Activated CD8-positive, alpha-beta T cell treated with anti-CD3 and anti-CD28 coated beads for 36 hours (primary cell): ENCODE measurements at regions of chr3 and their contacts with region 1.

Region 1: GRCh38 chr3:52056968-52057805 is 816 bp upstream of the DUSP7 start:
- DNase-seq: peak; percentile 100
- ATAC-seq: peak; percentile 82
- H3K4me3 Mint-ChIP-seq: peak overlapping the region; percentile 83
- H3K27ac Mint-ChIP-seq: peak overlapping the region; percentile 95
- H3K4me1 Mint-ChIP-seq: peaks cover 32% of the 10 kb centered on the region
- H3K27me3 Mint-ChIP-seq: no peaks in the 10 kb centered on the region
- CTCF ChIP-seq: no peak

Region 2: GRCh38 chr3:51941798-51942602 is 115.2 kb before region 1 on chr3 and contains the starts of genes PARP3 and RRP9:
- CTCF ChIA-PET with region 1: interaction called, 11 read pairs
- POLR2A ChIA-PET with region 1: interaction called, 3 read pairs
- intact Hi-C with region 1: no loop called
- DNase-seq: peak; percentile 100
- ATAC-seq: peak; percentile 93
- H3K4me3 Mint-ChIP-seq: peak within 1 kb of the TSS; percentile 83
- H3K27ac Mint-ChIP-seq: peak within 1 kb of the TSS; percentile 90
- H3K4me1 Mint-ChIP-seq: peaks cover 28% of the 10 kb centered on the region
- H3K27me3 Mint-ChIP-seq: no peaks in the 10 kb centered on the region
- CTCF ChIP-seq: peak; percentile 93
- total RNA-seq, gene PARP3: 11.5 to 12.7 TPM
- total RNA-seq, gene RRP9: 40.0 to 40.7 TPM

Region 3: GRCh38 chr3:51995346-51996163 is 61.6 kb before region 1 on chr3 and contains the start of gene RPL29:
- CTCF ChIA-PET with region 1: interaction called, 74 read pairs
- POLR2A ChIA-PET with region 1: interaction called, 19 read pairs
- intact Hi-C with region 1: loop called (anchors 5 kb)
- DNase-seq: peak; percentile 94
- ATAC-seq: peak; percentile 96
- H3K4me3 Mint-ChIP-seq: peak within 1 kb of the TSS; percentile 99
- H3K27ac Mint-ChIP-seq: peak within 1 kb of the TSS; percentile 100
- H3K4me1 Mint-ChIP-seq: peaks cover 33% of the 10 kb centered on the region
- H3K27me3 Mint-ChIP-seq: no peaks in the 10 kb centered on the region
- CTCF ChIP-seq: no peak
- total RNA-seq, gene RPL29: 2,039 to 2,045 TPM

Region 4: DNA sequence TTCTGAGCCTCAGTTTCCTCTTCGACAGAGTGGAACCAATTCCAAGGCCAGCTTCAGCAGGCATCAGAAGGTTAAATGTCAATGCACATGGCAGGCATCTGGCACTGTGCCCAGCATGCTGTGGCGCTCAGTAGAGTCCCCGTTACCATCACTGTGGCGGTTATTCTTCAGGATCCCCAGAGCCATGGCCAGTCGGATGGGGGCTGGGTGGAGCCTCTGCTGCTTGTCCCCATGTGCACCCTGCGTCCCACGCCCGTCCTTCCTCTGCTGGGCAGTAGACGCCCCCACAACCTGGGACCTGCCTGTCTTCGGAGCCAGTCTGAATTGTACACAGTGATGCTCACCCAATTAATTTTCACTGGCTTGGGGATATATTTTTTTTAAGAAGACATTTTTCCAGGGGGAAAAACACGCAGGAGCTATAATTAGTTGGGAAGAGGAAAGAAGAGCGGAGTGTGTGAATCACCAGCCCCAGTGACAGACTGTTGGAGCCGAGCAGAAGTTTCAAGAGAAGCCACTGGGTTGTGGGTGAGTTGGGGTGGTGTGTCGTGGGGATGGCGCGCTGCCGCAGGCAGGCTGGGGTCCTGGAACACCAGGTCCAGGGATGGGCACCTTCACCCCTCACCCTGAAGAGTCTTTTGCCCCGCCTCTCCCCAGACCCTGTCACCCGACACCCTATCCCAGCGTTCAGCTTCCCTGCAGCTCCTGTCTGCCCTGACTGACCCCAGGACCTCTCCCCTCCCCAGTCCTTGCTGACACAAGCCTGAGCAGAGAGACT is 34.7 kb before region 1 on chr3:
- CTCF ChIA-PET with region 1: no interaction called
- POLR2A ChIA-PET with region 1: no interaction called
- intact Hi-C with region 1: no loop called
- DNase-seq: no peak
- ATAC-seq: no peak
- H3K4me3 Mint-ChIP-seq: no peak overlapping the region
- H3K27ac Mint-ChIP-seq: no peak overlapping the region
- H3K4me1 Mint-ChIP-seq: no peaks in the 10 kb centered on the region
- H3K27me3 Mint-ChIP-seq: no peaks in the 10 kb centered on the region
- CTCF ChIP-seq: no peak

Region 5: DNA sequence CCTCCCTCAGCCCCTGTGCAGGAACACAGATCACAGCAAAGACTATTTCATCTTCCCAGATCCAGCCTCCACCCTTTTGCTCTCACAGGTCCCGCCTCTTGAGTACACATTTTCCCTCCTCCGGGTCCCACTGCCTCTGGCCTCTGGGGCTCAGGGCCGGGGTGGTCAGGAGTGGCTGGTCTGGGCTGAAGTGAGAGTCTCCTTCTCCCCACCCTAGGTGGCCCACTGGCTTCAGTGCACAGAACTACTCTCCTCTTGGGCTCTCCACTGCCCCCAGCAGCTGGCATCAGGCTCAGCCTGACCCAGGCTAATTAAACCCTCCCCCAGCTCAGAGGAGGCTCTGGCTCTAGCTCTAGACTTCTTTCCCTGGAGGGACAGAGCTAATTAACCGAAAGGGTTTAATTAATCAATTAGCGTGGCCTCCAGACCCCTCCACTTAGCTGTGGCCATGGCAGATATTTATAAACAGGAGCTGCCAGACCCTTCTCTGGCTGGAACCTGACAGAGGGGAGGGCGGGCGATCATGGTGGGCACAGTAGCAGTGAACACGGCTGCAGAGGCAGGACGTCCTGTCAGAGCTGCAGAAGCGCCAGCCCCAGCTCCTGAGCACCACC is 16.0 kb before region 1 on chr3:
- CTCF ChIA-PET with region 1: interaction called, 37 read pairs
- POLR2A ChIA-PET with region 1: interaction called, 5 read pairs
- intact Hi-C with region 1: no loop called
- DNase-seq: no peak
- ATAC-seq: no peak
- H3K4me3 Mint-ChIP-seq: no peak overlapping the region
- H3K27ac Mint-ChIP-seq: no peak overlapping the region
- H3K4me1 Mint-ChIP-seq: no peaks in the 10 kb centered on the region
- H3K27me3 Mint-ChIP-seq: no peaks in the 10 kb centered on the region
- CTCF ChIP-seq: no peak

Region 6: DNA sequence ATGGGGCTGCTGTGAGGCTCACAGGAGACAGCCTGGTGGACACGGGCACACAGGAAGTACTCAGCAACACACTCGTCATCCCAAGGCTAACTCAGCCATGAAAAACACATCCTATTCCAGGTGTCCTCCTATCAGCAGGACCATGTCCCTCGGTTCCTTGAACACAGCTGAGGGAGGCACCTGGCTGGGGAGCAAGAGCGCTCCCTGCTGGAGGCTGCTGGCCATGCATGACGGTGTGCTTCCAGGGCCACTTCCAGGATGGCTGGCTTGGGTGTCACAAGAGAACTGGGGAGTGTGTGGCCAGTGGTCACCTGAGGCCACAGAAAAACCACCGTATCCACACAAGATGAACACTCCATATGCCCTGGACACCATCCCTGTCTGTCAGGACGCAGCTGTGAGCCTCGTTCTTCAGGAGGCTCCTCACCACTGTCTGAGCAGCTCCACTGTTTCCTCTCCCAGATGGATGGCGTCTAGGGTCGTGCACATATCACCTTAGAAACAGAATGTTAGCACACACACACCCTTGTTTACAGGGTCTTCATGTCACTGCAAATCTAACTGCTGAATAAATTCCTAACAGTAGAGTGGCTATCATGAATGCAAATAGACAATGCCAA is 66.0 kb after region 1 on chr3:
- CTCF ChIA-PET with region 1: interaction called, 47 read pairs
- POLR2A ChIA-PET with region 1: interaction called, 7 read pairs
- intact Hi-C with region 1: no loop called
- DNase-seq: peak; percentile 79
- ATAC-seq: peak; percentile 94
- H3K4me3 Mint-ChIP-seq: no peak overlapping the region
- H3K27ac Mint-ChIP-seq: no peak overlapping the region
- H3K4me1 Mint-ChIP-seq: peaks cover 6% of the 10 kb centered on the region
- H3K27me3 Mint-ChIP-seq: no peaks in the 10 kb centered on the region
- CTCF ChIP-seq: peak; percentile 96

Region 7: DNA sequence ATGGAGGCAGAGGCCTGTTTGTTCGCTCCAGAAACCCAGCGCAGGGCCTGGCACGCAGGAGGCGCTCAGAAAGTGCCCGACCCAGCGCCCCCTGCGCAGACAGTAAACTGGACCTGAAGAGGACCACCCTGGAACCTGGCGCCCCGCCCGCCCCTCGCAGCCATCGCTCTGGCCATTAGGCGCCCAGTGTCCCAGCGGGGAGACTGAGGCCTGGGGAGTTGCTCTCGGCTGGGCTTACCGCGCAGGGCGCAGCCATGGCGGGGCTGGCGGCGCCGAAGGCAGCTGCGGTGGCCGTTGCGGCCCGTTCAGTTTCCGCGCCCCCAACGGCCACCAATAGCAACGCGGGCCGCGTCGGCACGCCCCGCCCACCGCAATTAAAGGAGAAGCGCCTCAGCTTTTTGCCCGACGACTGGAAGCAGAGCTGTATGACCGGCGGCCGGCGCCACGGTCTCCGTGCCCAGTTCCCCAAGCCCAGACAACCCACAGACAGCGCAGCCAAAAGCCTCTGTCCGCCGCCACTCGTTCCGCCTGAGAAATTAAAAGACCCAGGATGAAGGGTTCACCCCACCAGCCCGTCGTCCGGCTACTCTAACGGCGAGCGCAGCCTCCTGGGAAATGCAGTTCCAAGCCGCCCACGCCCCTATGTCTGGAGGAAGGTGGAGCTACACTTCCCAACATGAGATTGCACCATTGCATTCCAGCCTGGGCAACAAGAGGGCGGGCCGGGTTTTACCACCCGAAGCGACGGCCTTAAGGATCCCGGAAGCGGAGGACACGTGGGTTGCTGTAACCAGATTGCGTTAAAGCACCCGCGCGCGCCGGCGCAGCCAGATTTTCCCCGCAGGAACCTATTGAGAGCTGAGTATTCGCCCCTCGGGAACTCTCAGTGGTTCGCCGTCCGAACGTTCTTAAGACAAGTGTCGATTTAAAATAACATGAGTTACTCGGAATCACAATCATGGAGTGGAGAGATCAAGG is 97.2 kb after region 1 on chr3 and contains the start of gene POC1A:
- CTCF ChIA-PET with region 1: interaction called, 5 read pairs
- POLR2A ChIA-PET with region 1: interaction called, 12 read pairs
- intact Hi-C with region 1: loop called (anchors 1 kb)
- DNase-seq: peak; percentile 96
- ATAC-seq: peak; percentile 91
- H3K4me3 Mint-ChIP-seq: peak within 1 kb of the TSS; percentile 87
- H3K27ac Mint-ChIP-seq: peak within 1 kb of the TSS; percentile 95
- H3K4me1 Mint-ChIP-seq: peaks cover 20% of the 10 kb centered on the region
- H3K27me3 Mint-ChIP-seq: no peaks in the 10 kb centered on the region
- CTCF ChIP-seq: no peak
- total RNA-seq, gene POC1A: 21.2 to 23.5 TPM